Dorsolateral prefrontal cortex (tissue), 120 donors: ENCODE measurements at regions of chr20 and their contacts with region 1.

Region 1: DNA sequence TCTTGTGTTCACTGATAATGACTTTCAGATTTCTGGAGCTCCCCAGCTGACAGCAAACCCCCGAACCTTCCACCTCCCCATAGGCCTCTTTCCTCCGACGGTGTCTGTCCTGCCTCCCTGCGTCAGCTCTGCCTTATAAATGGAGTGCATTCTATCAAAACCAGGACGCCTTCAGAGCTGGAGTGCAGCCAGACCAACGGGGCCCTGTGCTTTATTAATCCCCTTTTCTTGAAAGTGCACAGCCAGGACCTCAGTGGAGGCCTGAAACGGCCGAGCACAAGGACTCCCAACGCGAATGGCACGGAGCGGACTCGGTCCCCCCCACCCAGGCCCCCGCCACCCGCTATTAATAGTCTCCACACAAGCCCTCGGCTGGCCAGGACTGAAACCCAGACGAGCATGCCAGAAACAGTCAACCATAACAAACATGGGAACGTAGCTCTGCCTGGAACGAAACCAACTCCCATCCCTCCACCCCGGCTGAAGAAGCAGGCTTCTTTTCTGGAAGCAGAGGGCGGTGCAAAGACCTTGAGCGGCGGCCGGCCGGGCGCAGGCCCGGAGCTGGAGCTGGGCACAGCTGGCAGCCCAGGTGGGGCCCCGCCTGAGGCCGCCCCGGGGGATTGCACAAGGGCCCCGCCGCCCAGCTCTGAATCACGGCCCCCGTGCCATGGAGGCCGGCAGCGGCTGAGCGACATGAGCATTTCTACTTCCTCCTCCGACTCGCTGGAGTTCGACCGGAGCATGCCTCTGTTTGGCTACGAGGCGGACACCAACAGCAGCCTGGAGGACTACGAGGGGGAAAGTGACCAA is 42.3 kb upstream of the NAA20 start:
- DNase-seq: peak; percentile 56 to 86 (median 81)
- H3K4me3 ChIP-seq: peak overlapping the region; percentile 39 to 87 (median 69)
- H3K27ac ChIP-seq: peak overlapping the region; percentile 34 to 98 (median 95)
- H3K27me3 ChIP-seq: no peaks in the 10 kb centered on the region
- CTCF ChIP-seq: peak in 17 of 56 donors; percentile 3 to 34 (median 12)

Region 2: GRCh38 chr20:19784511-19785172 is 190.2 kb before region 1 on chr20:
- intact Hi-C with region 1: loop called in 1 of 2 experiments (anchors 5 kb)
- DNase-seq: peak in 5 of 10 donors; percentile 22 to 70 (median 60)
- H3K4me3 ChIP-seq: peak overlapping the region in 19 of 59 donors; percentile 5 to 33 (median 18)
- H3K27ac ChIP-seq: peak overlapping the region in 53 of 59 donors; percentile 1 to 82 (median 69)
- H3K27me3 ChIP-seq: no peaks in the 10 kb centered on the region
- CTCF ChIP-seq: peak; percentile 63 to 94 (median 84)

Region 3: DNA sequence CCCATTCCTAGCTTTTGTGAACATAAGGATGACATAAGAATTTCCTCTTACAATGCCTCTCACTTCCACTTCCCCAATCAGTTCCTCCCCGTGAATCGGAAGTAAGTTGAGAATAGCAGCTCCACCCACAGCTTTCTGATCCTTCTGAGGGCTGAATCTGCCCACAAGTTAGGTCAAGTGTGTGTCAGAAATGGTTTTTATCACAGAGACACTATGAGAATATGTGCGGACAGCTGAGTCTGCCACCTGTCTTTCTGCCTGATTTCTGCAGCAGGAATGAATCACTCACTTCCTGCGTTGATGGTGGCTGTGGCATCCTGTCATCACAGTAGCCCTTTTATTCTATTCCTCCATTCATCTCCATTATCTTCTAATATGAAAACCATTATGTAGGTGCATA is 146.6 kb before region 1 on chr20:
- intact Hi-C with region 1: loop called in 1 of 2 experiments (anchors 5 kb)
- DNase-seq: peak in 1 of 10 donors; percentile 43
- H3K4me3 ChIP-seq: no peak overlapping the region
- H3K27ac ChIP-seq: peak overlapping the region in 2 of 59 donors; percentile 12 to 22
- H3K27me3 ChIP-seq: no peaks in the 10 kb centered on the region
- CTCF ChIP-seq: peak in 52 of 56 donors; percentile 16 to 73 (median 48)

Region 4: GRCh38 chr20:19934792-19935491 is 39.9 kb before region 1 on chr20:
- intact Hi-C with region 1: loop called (anchors 5 kb)
- DNase-seq: peak in 8 of 10 donors; percentile 37 to 78 (median 68)
- H3K4me3 ChIP-seq: peak overlapping the region in 57 of 59 donors; percentile 29 to 73 (median 48)
- H3K27ac ChIP-seq: peak overlapping the region in 57 of 59 donors; percentile 30 to 91 (median 82)
- H3K27me3 ChIP-seq: no peaks in the 10 kb centered on the region
- CTCF ChIP-seq: peak in 6 of 56 donors; percentile 5 to 14 (median 11)

Region 5: DNA sequence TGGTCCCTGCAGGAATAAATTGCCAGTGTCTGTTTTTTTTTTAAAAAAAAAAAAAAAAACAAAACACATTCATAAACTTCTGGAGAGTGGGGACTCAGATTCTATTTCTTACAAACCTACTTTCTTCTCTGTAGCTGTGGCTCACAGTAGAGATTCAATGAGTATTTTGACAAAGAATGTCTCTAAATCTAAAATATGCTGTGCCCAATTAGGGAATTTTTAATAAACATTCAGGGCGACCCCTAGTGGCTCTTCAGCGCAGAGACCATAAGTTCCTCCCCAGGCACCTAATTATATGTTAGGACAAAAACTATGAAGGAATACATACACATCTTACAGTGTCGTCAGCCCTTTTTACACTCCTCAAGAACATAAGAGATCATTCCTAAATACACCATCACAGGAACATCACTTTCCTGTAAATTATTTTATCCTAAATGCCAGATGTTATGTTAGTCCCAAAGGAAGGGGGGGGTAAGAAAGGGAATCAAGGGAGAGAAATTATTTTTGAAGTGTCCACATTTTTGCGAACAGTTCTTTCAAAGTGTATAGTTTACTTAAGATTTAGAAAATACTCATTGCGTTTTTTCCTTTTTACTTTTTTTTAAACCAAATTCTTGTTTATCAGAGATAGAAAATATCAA is 20.5 kb after region 1 on chr20:
- intact Hi-C with region 1: loop called (anchors 2 kb)
- DNase-seq: peak in 3 of 10 donors; percentile 29 to 68 (median 55)
- H3K4me3 ChIP-seq: peak overlapping the region in 1 of 59 donors; percentile 2
- H3K27ac ChIP-seq: peak overlapping the region in 55 of 59 donors; percentile 7 to 89 (median 79)
- H3K27me3 ChIP-seq: no peaks in the 10 kb centered on the region
- CTCF ChIP-seq: peak; percentile 62 to 93 (median 86)

Region 6: GRCh38 chr20:20225325-20226043 is 250.7 kb after region 1 on chr20:
- intact Hi-C with region 1: no loop called
- DNase-seq: no peak
- H3K4me3 ChIP-seq: no peak overlapping the region
- H3K27ac ChIP-seq: no peak overlapping the region
- H3K27me3 ChIP-seq: no peaks in the 10 kb centered on the region
- CTCF ChIP-seq: no peak

Region 7: GRCh38 chr20:20317195-20317594 is 342.4 kb after region 1 on chr20:
- intact Hi-C with region 1: no loop called
- DNase-seq: no peak
- H3K4me3 ChIP-seq: peak overlapping the region in 8 of 59 donors; percentile 5 to 38 (median 19)
- H3K27ac ChIP-seq: no peak overlapping the region
- H3K27me3 ChIP-seq: no peaks in the 10 kb centered on the region
- CTCF ChIP-seq: no peak